Breast epithelium (tissue), 4 donors: ENCODE measurements at regions of chr7 and their contacts with region 1.

Region 1: DNA sequence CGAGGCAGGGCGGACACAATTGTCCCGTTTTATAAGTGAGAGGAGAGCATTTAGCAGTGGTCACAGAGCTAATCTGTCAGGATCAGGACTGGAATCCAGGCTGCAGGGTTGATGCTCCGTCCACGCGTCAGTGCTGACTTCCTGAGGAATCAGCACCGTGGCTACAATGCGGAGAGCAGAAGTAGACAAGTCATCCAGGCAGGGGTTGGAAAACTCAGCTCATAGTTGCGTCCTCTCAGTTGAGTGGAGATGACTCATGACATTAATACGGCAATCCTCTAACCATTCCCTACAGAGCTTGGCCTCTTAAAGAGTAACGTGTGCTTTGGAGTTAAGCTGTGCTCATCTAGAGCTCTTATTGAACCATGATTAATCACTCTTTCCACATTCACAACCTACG is 17.1 kb upstream of the HTR5A start:
- DNase-seq: no peak
- H3K4me3 ChIP-seq: no peak overlapping the region
- H3K27ac ChIP-seq: no peak overlapping the region
- H3K4me1 ChIP-seq: no peaks in the 10 kb centered on the region
- H3K27me3 ChIP-seq: peaks cover 0 to 5% of the 10 kb centered on the region in 2 donors
- CTCF ChIP-seq: no peak
- POLR2A ChIP-seq: no peak

Region 2: GRCh38 chr7:155069992-155070751 is 17.2 kb after region 1 on chr7 and contains the start of gene HTR5A:
- intact Hi-C with region 1: loop called (anchors 1 kb)
- DNase-seq: peak; percentile 37 to 80
- H3K4me3 ChIP-seq: no peak within 1 kb of the TSS
- H3K27ac ChIP-seq: no peak within 1 kb of the TSS
- H3K4me1 ChIP-seq: no peaks in the 10 kb centered on the region
- H3K27me3 ChIP-seq: peaks cover 0 to 29% of the 10 kb centered on the region in 2 donors
- CTCF ChIP-seq: no peak
- POLR2A ChIP-seq: no peak
- total RNA-seq, gene HTR5A: not detected